GM13976 (cell line): ENCODE measurements at regions of chr18 and their contacts with region 1.

Region 1: DNA sequence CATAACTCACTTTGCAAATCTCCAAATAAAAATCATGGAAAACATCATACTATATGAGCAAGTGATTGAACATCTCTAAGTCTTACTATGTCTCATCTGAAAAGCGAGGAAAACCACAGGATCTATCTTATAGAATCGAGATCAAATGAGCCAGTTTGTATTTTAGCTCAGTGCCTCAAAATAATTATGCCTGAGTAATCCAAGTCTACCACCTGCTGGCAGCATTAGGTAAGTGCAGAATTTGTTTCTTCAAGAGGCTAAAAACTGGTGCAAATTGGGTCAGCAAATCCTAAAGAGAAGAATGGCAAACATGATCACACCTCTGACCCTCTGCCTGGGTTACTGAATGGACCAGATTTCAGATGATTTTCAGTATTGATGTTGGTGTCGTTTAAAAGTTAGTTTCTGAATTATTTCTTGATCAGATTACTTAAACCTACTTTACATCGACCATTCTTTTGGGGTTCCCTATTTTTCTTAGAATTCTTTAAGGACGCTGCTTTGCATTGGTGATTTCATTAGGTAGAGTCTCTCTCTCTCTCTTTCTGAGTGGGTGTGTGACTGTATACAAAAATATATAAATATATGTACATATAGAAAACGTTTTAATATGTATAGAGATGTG is 12.7 kb upstream of the FHOD3 start:
- DNase-seq: peak; percentile 52
- CTCF ChIP-seq: peak; percentile 81

Region 2: GRCh38 chr18:35756506-35757117 is 528.2 kb before region 1 on chr18:
- in situ Hi-C with region 1: loop called (anchors 10 kb)
- DNase-seq: peak; percentile 71
- CTCF ChIP-seq: peak; percentile 73

Region 3: DNA sequence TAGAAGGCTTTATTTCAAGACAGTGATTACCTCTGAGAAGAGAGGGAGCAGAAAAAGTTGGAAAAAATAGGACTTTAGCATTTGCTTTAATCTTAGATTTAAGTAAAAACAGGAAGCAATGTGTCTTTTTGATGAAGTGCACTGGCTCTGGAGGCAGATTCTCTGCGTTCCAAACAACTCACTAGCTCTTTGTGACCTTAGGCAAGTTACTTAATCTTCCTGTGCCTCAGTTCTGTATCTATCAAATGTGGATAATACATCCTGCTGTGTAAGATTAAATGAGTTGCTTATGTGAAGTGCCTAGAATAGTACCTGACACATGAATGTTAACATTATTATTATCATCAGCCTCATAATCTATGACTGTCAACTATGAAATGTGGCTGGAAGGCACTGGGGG is 259.8 kb before region 1 on chr18:
- in situ Hi-C with region 1: loop called (anchors 10 kb)
- DNase-seq: no peak
- CTCF ChIP-seq: no peak

Region 4: DNA sequence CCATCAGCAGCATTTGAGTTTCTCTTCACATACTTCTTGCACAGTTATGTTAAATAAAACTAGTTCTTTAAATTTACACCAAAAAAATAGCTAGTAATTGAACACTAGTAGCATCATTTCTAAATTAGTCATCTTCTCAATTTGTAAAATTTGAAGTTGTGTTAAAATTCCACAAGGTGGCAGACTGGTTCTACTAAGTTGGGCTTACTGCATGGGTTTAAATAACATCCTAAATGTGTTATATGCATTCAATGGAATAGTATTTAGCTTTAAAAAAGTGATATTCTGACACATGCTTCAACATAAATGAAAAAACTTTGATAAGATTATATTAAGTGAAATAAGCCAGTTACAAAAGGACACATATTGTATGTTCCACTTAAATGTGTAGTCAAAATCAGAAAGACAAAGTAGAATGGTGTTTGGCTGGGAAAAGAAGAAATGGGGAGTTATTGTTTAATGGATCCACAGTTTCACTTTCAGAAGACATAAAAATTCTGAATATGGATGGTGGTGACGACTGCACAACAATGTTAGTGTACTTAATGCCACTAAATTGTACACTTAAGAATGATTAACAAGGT is 188.8 kb before region 1 on chr18:
- in situ Hi-C with region 1: loop called (anchors 5 kb)
- DNase-seq: peak; percentile 46
- CTCF ChIP-seq: no peak